ENCODE measurements at regions of chr1 and their contacts with region 1.

Region 1: GRCh38 chr1:229661022-229661877 is 35.2 kb downstream of the URB2 start:
- DNase-seq: peak; percentile 77
- H3K4me3 Mint-ChIP-seq: no peak overlapping the region
- H3K27ac Mint-ChIP-seq: no peak overlapping the region
- H3K4me1 Mint-ChIP-seq: peaks cover 5% of the 10 kb centered on the region
- H3K27me3 Mint-ChIP-seq: no peaks in the 10 kb centered on the region

Region 2: GRCh38 chr1:229643996-229644745 is 17.1 kb before region 1 on chr1:
- CTCF ChIA-PET with region 1: no interaction called
- DNase-seq: no peak
- H3K4me3 Mint-ChIP-seq: no peak overlapping the region
- H3K27ac Mint-ChIP-seq: no peak overlapping the region
- H3K4me1 Mint-ChIP-seq: no peaks in the 10 kb centered on the region
- H3K27me3 Mint-ChIP-seq: no peaks in the 10 kb centered on the region

Region 3: DNA sequence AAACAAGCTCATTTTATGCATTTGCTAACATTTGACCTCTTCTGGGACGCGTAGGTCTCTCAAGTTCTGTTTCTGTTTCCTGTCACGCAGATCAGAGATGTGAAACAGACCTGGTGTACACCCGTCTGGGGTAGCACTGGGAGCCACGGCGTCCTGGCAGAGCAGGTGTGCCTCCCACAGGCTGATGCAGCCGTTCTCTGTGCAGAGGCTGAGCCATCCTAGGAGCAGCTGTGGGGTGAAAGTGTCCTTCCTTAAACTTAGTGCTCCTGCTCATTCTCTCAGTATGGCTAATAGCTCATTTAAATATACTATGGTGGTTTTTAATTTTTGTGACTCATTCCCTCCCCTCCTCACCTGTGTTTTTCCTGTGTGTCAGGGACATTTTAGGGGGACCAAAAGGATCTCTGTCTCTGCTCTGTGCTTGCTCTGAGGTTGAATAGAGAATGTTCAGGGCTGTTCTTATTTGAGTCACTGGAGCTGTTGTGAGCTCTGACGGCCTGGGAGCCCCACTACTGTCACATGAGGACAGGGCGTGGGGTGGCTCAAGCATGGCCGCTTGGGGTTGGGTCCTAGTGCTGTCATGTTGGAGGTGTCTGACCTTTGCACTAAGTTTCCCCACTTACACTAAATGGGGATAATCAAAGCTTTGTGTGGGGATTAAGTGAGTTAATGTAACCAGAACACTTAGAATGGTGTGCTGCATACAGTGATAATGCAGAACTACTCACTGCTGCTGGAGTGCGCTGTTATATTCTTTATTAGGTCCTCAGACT is 448.8 kb after region 1 on chr1:
- CTCF ChIA-PET with region 1: interaction called, 14 read pairs
- DNase-seq: peak; percentile 78
- H3K4me3 Mint-ChIP-seq: no peak overlapping the region
- H3K27ac Mint-ChIP-seq: peak overlapping the region; percentile 70
- H3K4me1 Mint-ChIP-seq: peaks cover 84% of the 10 kb centered on the region
- H3K27me3 Mint-ChIP-seq: no peaks in the 10 kb centered on the region

Region 4: DNA sequence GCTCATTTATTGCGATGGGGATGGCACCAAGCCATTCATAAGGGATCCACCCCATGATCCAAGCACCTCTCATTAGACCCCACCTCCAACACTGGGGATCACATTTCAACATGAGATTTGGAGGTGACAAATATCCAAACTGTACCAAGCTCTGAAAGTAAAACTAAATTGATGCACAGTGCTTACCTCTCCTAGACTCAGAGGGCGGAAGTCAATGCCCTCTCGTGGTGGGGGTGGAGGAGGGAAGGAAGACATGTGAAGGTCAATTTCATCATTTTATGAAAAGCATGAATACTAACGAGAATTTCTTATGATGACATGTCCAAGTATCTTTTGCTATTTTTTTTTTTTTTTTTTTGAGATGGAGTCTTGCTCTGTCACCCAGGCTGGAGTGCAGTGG is 644.9 kb after region 1 on chr1:
- CTCF ChIA-PET with region 1: interaction called, 16 read pairs
- DNase-seq: peak; percentile 44
- H3K4me3 Mint-ChIP-seq: no peak overlapping the region
- H3K27ac Mint-ChIP-seq: no peak overlapping the region
- H3K4me1 Mint-ChIP-seq: peaks cover 13% of the 10 kb centered on the region
- H3K27me3 Mint-ChIP-seq: peaks cover 20% of the 10 kb centered on the region

Region 5: GRCh38 chr1:230312676-230313075 is 651.4 kb after region 1 on chr1:
- CTCF ChIA-PET with region 1: interaction called, 16 read pairs
- DNase-seq: no peak
- H3K4me3 Mint-ChIP-seq: no peak overlapping the region
- H3K27ac Mint-ChIP-seq: no peak overlapping the region
- H3K4me1 Mint-ChIP-seq: peaks cover 2% of the 10 kb centered on the region
- H3K27me3 Mint-ChIP-seq: peaks cover 25% of the 10 kb centered on the region

Measured in activated naive CD4-positive, alpha-beta T cell treated with anti-CD3 and anti-CD28 coated beads, Interleukin-2, amount 10 ng/mL, durations not matched to agents 7 days and 5 days (primary cell).